Heart left ventricle (tissue), 16 donors: ENCODE measurements at regions of chr5 and their contacts with region 1.

Region 1: GRCh38 chr5:217860-218456 is at the starts of genes CCDC127 and SDHA:
- DNase-seq: peak; percentile 97 to 100 (median 98)
- ATAC-seq: peak; percentile 95 to 97 (median 96)
- H3K4me3 ChIP-seq: peak within 1 kb of the TSS; percentile 81 to 100 (median 95)
- H3K27ac ChIP-seq: peak within 1 kb of the TSS; percentile 91 to 99 (median 96)
- H3K4me1 ChIP-seq: peaks cover 0 to 47% (median 25%) of the 10 kb centered on the region in 12 donors
- H3K27me3 ChIP-seq: no peaks in the 10 kb centered on the region
- CTCF ChIP-seq: peak in 10 of 12 donors; percentile 16 to 63 (median 40)
- POLR2A ChIP-seq: peak in 1 of 2 donors; percentile 96
- total RNA-seq, gene CCDC127: 5.7 to 10.3 (median 7.5) TPM
- total RNA-seq, gene SDHA: 422 to 854 (median 727) TPM

Region 2: DNA sequence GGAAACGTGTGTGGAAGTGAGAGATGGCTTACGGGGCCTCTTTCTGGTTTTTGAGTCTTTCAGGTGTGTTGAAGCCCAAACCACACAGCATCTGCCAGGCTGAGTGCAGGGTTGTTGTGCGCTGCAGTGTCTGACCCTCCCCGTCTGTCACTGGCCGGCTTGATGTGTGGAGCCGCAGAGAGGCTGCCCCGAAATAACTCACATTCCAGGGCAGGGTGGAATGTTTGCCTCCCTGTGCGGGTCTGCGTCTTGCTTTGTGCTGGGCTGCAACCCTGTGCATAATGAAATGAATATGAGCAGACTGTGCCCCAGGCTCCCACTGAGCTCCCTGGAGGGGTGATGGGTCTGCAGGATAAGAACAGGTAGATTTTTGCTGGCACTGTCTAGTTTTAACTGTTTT is 135.9 kb before region 1 on chr5:
- intact Hi-C with region 1: no loop called
- DNase-seq: no peak
- ATAC-seq: no peak
- H3K4me3 ChIP-seq: no peak overlapping the region
- H3K27ac ChIP-seq: no peak overlapping the region
- H3K4me1 ChIP-seq: peaks cover 0 to 5% (median 0%) of the 10 kb centered on the region in 12 donors
- H3K27me3 ChIP-seq: peaks cover 0 to 13% (median 0%) of the 10 kb centered on the region in 9 donors
- CTCF ChIP-seq: no peak
- POLR2A ChIP-seq: no peak

Region 3: GRCh38 chr5:159441-160172 is 58.4 kb before region 1 on chr5:
- intact Hi-C with region 1: no loop called
- DNase-seq: peak in 1 of 5 donors; percentile 11
- ATAC-seq: no peak
- H3K4me3 ChIP-seq: no peak overlapping the region
- H3K27ac ChIP-seq: no peak overlapping the region
- H3K4me1 ChIP-seq: no peaks in the 10 kb centered on the region
- H3K27me3 ChIP-seq: peaks cover 0 to 16% (median 0%) of the 10 kb centered on the region in 9 donors
- CTCF ChIP-seq: no peak
- POLR2A ChIP-seq: no peak

Region 4: GRCh38 chr5:188488-189481 is 29.2 kb before region 1 on chr5:
- intact Hi-C with region 1: loop called in 4 of 10 experiments (anchors 1 to 2 kb)
- DNase-seq: peak; percentile 83 to 91 (median 90)
- ATAC-seq: peak; percentile 45 to 66 (median 60)
- H3K4me3 ChIP-seq: peak overlapping the region in 7 of 12 donors; percentile 0 to 39 (median 19)
- H3K27ac ChIP-seq: peak overlapping the region in 9 of 12 donors; percentile 85 to 97 (median 95)
- H3K4me1 ChIP-seq: peaks cover 0 to 43% (median 18%) of the 10 kb centered on the region in 12 donors
- H3K27me3 ChIP-seq: peaks cover 0 to 12% (median 0%) of the 10 kb centered on the region in 9 donors
- CTCF ChIP-seq: peak; percentile 88 to 98 (median 94)
- POLR2A ChIP-seq: no peak

Region 5: DNA sequence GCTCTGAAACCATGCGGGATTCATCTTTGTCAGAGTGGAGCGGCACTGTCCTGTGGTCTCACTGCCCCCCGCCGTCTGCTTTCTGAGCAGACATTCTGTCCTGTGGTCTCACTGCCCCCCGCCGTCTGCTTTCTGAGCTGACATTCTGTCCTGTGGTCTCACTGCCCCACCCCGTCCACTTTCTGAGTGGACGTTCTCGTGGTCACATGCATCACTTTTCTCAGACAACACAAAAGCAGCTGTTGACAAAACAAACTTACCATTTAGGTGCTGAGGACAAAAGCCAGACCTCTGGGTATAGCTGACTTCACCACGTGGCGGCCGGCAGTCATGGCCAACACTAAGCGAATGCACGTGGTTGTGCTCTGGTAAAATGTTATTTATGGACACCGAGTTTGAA is 23.9 kb before region 1 on chr5:
- intact Hi-C with region 1: loop called in 5 of 10 experiments (anchors 1 to 2 kb)
- DNase-seq: peak; percentile 72 to 87 (median 77)
- ATAC-seq: peak; percentile 24 to 60 (median 49)
- H3K4me3 ChIP-seq: peak overlapping the region in 10 of 12 donors; percentile 7 to 55 (median 45)
- H3K27ac ChIP-seq: peak overlapping the region; percentile 49 to 97 (median 92)
- H3K4me1 ChIP-seq: peaks cover 0 to 65% (median 21%) of the 10 kb centered on the region in 12 donors
- H3K27me3 ChIP-seq: peaks cover 0 to 12% (median 0%) of the 10 kb centered on the region in 9 donors
- CTCF ChIP-seq: no peak
- POLR2A ChIP-seq: peak in 1 of 2 donors; percentile 32